Vagina (tissue), 2 donors: ENCODE measurements at regions of chr12 and their contacts with region 1.

Region 1: DNA sequence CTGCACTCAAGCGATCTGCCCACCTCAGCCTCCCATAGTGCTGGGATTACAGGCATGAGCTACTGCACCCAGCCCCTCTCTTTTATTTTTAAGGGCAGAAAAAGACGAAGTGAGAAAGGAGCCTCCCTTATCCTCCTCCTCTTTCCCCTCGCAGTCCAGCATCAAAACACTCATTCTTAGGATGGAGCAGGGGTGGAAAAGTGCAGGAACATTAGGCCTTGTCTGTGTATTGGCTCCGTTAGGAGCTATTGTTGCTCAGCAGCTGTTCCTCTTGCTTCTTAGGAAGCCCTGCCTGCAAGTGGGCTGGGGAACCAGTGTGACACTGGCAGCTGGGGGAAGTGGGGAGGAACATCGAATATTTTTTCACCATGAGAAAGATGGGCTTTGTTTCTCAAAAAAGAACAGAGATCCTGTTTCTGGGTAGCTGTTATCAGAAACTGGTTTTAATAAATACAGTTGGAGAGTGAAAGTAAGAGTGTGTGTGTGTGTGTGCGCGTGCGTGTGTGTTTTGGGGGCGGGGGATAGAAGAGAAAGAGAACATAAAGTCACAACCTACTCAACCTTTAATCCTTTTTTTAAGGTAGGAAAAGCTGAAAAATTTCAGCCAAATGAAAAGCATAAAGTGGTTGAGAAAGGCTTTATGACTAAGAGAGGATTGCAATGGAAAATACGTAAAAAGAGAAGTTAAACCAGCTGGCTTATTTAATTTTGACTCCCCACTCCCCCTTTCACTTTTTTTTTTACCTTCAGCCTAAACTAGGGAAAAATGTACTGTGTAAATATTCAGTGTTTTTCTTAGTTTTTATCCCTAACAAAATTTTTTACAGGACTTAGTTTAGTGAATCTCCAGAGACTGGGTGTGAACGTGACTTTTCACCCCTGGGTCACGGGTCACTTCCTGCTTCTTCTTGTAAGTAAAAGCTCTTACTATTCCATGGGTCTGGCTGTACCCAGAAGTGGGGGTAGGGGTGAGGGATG is 197.2 kb upstream of the PLEKHG7 start:
- DNase-seq: peak in 1 of 2 donors; percentile 94
- H3K4me3 ChIP-seq: peak overlapping the region in 1 of 2 donors; percentile 20
- H3K27ac ChIP-seq: peak overlapping the region; percentile 83
- H3K4me1 ChIP-seq: peaks cover 62% of the 10 kb centered on the region
- H3K27me3 ChIP-seq: no peaks in the 10 kb centered on the region
- CTCF ChIP-seq: no peak
- POLR2A ChIP-seq: no peak

Region 2: GRCh38 chr12:92551853-92552397 is 46.4 kb after region 1 on chr12:
- intact Hi-C with region 1: loop called (anchors 10 kb)
- DNase-seq: no peak
- H3K4me3 ChIP-seq: no peak overlapping the region
- H3K27ac ChIP-seq: no peak overlapping the region
- H3K4me1 ChIP-seq: peaks cover 29% of the 10 kb centered on the region
- H3K27me3 ChIP-seq: no peaks in the 10 kb centered on the region
- CTCF ChIP-seq: no peak
- POLR2A ChIP-seq: no peak

Region 3: DNA sequence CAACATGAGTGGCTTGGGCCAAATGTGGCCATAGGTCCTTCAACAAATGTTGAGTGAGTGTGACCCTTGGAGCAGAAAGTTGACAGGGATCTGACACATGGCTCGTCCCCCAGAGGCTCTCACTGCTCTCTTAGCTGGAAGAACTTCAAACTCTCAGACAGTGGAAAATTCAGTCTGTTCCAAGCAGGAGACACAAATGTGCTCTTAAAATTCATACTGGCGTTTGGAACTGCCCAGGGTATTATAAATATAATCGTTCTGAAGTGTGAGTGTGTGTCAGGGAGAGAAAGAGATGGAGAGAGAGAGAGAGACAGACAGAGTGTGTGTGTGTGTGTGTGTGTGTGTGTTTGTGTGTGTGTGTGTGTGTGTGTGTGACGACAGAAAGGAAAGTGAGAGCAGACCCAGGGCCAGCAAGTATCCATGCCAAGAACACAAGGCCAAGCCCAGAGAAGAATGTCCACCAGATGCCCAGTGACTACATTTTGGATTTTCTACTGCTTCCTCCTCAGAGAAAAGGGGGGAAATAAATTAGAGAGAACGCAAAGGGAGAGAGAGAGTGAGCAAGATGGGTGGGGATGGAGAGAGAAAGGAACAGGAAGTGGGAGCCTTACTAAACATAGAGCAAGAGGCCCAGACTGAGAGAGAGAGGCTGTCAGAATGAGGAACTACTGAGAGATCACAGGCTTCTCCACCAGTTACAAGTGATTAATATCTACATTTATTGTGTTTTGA is 678.6 kb after region 1 on chr12:
- intact Hi-C with region 1: no loop called
- DNase-seq: no peak
- H3K4me3 ChIP-seq: no peak overlapping the region
- H3K27ac ChIP-seq: peak overlapping the region; percentile 79
- H3K4me1 ChIP-seq: peaks cover 21% of the 10 kb centered on the region
- H3K27me3 ChIP-seq: no peaks in the 10 kb centered on the region
- CTCF ChIP-seq: no peak
- POLR2A ChIP-seq: no peak